PC-9 (cell line): ENCODE measurements at regions of chr1 and their contacts with region 1.

Region 1: DNA sequence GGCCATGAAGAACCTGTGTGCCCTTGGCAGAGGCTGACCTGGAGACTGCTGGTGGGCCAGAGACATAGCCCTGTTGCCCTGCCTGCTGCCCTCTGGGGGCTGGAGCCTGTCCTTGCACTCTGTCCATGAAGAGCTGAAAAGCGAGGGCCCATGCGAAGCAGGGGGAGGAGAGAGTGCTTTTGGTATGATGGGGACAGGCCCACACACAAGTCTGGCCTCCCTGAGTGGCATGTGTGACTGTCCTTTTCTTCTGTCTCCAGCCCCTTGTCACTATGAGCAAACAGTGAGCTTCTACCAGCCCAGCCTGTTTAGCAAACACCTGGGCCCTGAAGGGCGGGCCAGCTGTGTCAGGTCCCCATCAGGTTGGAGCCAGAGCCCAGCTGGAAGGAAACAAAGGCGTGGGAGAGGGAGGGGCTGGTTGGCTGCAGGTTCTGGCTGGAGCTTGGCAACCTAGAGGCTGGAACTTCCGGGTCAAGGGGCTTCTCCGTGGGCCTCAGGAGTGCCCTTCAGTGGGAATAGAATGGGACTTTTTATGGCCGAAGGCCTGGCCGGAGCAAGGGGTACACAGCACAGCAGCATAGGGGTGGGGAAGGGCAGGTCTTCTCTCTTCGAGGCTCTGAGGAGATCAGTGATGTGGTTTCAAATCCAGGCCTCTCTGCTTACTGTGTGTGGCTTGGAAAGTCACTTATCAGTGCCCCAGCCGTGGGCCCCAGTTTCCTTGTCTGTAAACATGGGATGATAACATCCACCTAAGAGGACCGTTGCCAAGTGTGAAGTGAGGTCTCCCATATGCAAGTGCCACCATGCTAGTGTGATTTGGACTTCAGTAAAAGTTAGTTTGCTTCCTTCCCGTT is 14.3 kb downstream of the QSOX1 start:
- DNase-seq: peak; percentile 53 to 68
- H3K4me3 ChIP-seq: no peak overlapping the region; the same call in 1 of the 2 replicates
- H3K27ac ChIP-seq: peak overlapping the region; percentile 73
- H3K4me1 ChIP-seq: peaks cover 69% of the 10 kb centered on the region
- H3K27me3 ChIP-seq: no peaks in the 10 kb centered on the region
- CTCF ChIP-seq: peak; percentile 67

Region 2: GRCh38 chr1:179840107-179840506 is 328.9 kb before region 1 on chr1:
- CTCF ChIA-PET with region 1: interaction called, 12 read pairs
- POLR2A ChIA-PET with region 1: no interaction called
- intact Hi-C with region 1: no loop called
- DNase-seq: no peak
- H3K4me3 ChIP-seq: no peak overlapping the region
- H3K27ac ChIP-seq: no peak overlapping the region
- H3K4me1 ChIP-seq: no peaks in the 10 kb centered on the region
- H3K27me3 ChIP-seq: no peaks in the 10 kb centered on the region
- CTCF ChIP-seq: no peak

Region 3: GRCh38 chr1:179882243-179883039 is 286.6 kb before region 1 on chr1 and contains the start of gene TOR1AIP1:
- CTCF ChIA-PET with region 1: interaction called, 3 read pairs
- POLR2A ChIA-PET with region 1: no interaction called
- intact Hi-C with region 1: loop called (anchors 2 kb)
- DNase-seq: peak; percentile 89 to 96
- H3K4me3 ChIP-seq: peak within 1 kb of the TSS; percentile 92
- H3K27ac ChIP-seq: peak within 1 kb of the TSS; percentile 90
- H3K4me1 ChIP-seq: peaks cover 21% of the 10 kb centered on the region
- H3K27me3 ChIP-seq: no peaks in the 10 kb centered on the region
- CTCF ChIP-seq: peak; percentile 50
- total RNA-seq, gene TOR1AIP1: 23.5 and 24.4 TPM in 2 replicates

Region 4: DNA sequence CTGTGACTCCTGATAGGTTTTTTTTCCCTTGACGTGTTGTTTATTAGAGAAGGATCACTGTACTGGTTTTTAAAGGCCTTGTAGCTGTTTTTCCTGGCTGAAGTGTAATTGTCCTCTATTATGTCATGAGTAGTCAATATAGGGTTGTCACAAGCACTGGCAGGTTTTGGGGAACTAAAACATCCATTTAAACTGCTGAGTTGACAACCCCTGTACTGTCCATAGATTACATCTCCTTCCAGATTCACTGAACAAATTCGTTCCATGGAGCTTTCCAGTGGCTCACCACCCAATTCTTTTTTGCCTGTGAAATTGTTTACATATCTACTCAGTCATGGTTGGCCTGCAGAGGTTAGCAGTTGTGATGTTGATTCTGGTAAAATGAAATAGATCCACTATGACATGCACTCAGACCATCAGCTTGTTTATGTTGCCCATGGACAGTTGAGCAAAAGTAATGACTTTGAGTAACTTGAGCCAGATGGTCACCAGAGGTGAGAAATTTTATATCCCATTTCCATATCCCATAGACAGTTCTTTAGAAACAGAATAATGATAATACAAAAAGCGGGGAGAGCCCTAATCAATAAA is 74.2 kb before region 1 on chr1:
- CTCF ChIA-PET with region 1: no interaction called
- POLR2A ChIA-PET with region 1: interaction called, 8 read pairs
- intact Hi-C with region 1: loop called (anchors 1 kb)
- DNase-seq: no peak
- H3K4me3 ChIP-seq: no peak overlapping the region
- H3K27ac ChIP-seq: no peak overlapping the region
- H3K4me1 ChIP-seq: peaks cover 25% of the 10 kb centered on the region
- H3K27me3 ChIP-seq: no peaks in the 10 kb centered on the region
- CTCF ChIP-seq: no peak